CD8-positive, alpha-beta T cell (primary cell): ENCODE measurements at regions of chr3 and their contacts with region 1.

Region 1: GRCh38 chr3:18891641-18892040 is 256.7 kb upstream of the KCNH8 start:
- DNase-seq: peak in 7 of 9 experiments; percentile 0 to 57 (median 10)
- ATAC-seq: peak; percentile 72
- H3K4me3 ChIP-seq: no peak overlapping the region
- H3K4me3 Mint-ChIP-seq: no peak overlapping the region
- H3K27ac ChIP-seq: no peak overlapping the region
- H3K27ac Mint-ChIP-seq: no peak overlapping the region
- H3K4me1 ChIP-seq: peaks cover 7% of the 10 kb centered on the region
- H3K4me1 Mint-ChIP-seq: peaks cover 12% of the 10 kb centered on the region
- H3K27me3 ChIP-seq: peaks cover 0 to 3% of the 10 kb centered on the region in 2 experiments
- H3K27me3 Mint-ChIP-seq: peaks cover 12% of the 10 kb centered on the region
- CTCF ChIP-seq: no peak

Region 2: DNA sequence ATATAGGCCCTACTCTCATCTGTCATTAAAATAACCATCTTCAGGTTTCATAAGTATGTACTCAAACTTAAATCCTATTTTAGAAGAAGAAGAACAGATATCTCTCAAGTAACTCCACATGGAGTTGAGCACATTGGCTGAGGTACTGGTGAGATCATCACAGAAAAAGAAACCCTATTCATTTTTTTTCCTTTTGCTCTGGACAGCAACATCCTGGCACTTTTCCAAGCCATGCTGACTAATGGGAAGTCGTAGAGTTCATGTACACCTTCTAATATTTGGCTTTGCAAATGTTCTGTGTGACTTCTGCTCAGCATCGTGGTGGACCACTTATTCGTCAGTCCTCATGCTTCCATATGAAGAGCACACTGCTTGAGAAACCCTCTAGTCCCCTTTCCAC is 79.3 kb before region 1 on chr3:
- CTCF ChIA-PET with region 1: no interaction called
- POLR2A ChIA-PET with region 1: no interaction called
- intact Hi-C with region 1: no loop called
- DNase-seq: no peak
- ATAC-seq: no peak
- H3K4me3 ChIP-seq: no peak overlapping the region
- H3K4me3 Mint-ChIP-seq: no peak overlapping the region
- H3K27ac ChIP-seq: no peak overlapping the region
- H3K27ac Mint-ChIP-seq: no peak overlapping the region
- H3K4me1 ChIP-seq: no peaks in the 10 kb centered on the region
- H3K4me1 Mint-ChIP-seq: peaks cover 2% of the 10 kb centered on the region
- H3K27me3 ChIP-seq: no peaks in the 10 kb centered on the region
- H3K27me3 Mint-ChIP-seq: no peaks in the 10 kb centered on the region
- CTCF ChIP-seq: no peak

Region 3: DNA sequence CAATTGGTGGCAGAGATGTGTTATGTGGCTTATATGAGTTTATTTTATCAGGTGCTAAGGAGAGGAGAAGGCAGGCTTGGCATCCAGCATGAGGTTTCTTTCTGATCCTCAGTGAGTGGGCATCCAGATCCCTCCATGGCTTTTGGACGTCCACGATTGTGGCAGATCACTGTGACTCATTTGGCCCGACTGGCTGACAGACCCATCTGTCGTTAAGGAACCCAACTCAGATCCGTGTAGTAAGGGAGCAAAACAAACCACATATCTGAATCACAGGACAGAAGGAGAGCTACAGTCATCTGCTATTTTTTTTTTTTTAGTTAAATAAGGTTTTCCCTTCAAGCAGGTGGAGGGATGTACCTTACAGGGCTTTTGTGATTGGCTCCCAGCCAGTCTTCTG is 59.7 kb after region 1 on chr3:
- CTCF ChIA-PET with region 1: no interaction called
- POLR2A ChIA-PET with region 1: no interaction called
- intact Hi-C with region 1: loop called in 1 of 2 experiments (anchors 10 kb)
- DNase-seq: no peak
- ATAC-seq: no peak
- H3K4me3 ChIP-seq: no peak overlapping the region
- H3K4me3 Mint-ChIP-seq: no peak overlapping the region
- H3K27ac ChIP-seq: no peak overlapping the region
- H3K27ac Mint-ChIP-seq: no peak overlapping the region
- H3K4me1 ChIP-seq: no peaks in the 10 kb centered on the region
- H3K4me1 Mint-ChIP-seq: no peaks in the 10 kb centered on the region
- H3K27me3 ChIP-seq: no peaks in the 10 kb centered on the region
- H3K27me3 Mint-ChIP-seq: peaks cover 3% of the 10 kb centered on the region
- CTCF ChIP-seq: no peak